PC-9 (cell line): ENCODE measurements at regions of chr20 and their contacts with region 1.

Region 1: DNA sequence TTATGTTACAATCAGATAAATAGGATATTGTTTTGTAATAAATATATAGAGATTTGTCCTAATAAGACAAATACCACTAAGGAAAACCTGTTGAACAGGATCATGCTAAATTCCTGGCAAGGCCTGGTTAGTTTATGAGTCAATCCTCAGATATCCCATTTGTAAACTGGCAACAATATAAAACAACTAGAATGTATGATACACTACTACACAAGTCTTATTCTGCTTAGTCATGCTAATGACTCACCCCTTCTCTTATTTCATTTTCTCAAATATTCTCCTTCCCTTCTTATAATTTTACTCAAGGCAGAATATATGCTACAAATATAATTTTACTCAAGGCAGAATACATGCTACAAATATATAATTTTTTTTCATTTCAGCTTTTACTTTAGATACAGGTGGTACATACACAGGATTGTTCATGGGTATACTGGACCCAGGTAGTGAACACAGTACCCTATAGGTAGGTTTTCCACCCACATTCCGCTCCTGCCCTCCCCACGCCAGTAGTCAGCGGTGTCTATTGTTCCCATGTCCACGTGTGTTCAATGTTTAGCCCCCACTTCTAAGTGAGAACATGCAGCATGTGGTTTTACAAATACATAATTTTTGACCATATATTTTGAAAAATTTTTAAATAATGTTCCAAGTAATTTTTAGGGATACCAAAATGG is 6.3 kb downstream of the OSER1 start:
- DNase-seq: peak; percentile 47 to 100
- H3K4me3 ChIP-seq: peak overlapping the region; percentile 49; the same call in 1 of the 2 replicates
- H3K27ac ChIP-seq: peak overlapping the region; percentile 96
- H3K4me1 ChIP-seq: peaks cover 84% of the 10 kb centered on the region
- H3K27me3 ChIP-seq: no peaks in the 10 kb centered on the region
- CTCF ChIP-seq: 0 out of 2 replicates have a peak, but pooled peaks have one; percentile 14

Region 2: DNA sequence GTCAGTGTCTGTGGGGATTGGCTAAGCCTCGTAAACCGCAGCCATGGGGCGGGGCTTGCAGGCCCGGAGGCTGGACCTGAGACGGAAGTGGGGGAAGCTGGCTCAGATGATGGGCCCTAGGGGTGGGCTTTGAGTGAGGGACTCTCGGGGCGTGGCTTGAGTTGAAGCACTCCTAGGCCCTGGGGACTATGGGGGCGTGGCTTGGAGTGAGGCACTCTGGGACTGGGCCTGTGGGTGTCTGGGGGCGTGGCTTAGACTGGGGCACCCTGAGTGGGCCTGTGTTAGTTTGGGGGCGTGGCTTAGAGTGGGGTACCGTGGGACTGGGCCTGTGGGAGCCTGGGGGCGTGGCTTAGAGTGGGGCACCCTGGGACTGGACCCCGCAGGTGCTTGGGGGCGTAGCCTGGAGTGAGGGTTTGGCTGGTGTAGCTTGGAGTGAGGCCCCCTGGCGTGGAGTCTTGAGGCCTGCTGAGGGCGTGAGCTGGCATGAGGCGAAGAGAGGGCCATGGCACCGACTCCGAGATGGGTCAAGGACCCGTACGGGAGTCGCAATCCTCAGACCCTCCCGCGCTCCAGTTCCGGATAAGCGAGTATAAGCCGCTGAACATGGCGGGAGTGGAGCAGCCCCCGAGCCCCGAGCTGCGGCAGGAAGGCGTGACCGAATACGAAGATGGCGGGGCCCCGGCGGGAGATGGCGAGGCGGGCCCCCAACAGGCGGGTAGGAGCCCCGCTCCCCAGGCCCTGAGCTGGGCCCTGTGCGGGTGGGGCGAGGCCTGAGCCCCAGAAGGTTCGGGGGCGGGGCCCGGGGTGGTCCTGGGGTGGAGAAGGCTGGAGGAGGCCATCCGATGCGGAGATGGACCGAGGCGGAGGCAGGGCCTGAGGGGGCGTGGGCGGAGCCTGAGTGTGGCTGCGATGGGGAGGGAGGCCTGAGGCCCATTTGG is 690.0 kb before region 1 on chr20:
- CTCF ChIA-PET with region 1: no interaction called
- POLR2A ChIA-PET with region 1: no interaction called
- intact Hi-C with region 1: loop called (anchors 1 kb)
- DNase-seq: peak; percentile 97 to 99
- H3K4me3 ChIP-seq: peak overlapping the region; percentile 60
- H3K27ac ChIP-seq: no peak overlapping the region
- H3K4me1 ChIP-seq: peaks cover 10% of the 10 kb centered on the region; the same call in 1 of the 2 replicates
- H3K27me3 ChIP-seq: no peaks in the 10 kb centered on the region
- CTCF ChIP-seq: peak; percentile 53

Region 3: DNA sequence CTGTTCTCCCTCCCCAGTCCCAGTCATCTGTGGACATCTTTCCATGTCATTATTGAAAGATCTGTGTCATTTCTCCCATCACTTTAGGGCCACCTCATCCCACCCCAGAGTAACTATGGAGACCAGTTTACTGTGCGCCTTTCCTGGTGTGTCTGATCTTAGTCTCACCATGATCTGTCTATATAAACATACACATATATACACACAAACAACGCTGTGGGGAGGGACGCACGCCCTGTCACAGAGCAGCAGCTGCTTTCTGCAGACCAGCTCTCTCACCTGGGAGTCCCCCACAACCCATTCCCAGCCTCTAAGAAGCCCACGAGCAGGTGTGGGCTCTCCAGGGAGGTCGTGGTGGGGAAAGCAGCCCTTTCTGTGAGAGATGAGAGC is 357.8 kb before region 1 on chr20:
- CTCF ChIA-PET with region 1: no interaction called
- POLR2A ChIA-PET with region 1: interaction called, 15 read pairs
- intact Hi-C with region 1: no loop called
- DNase-seq: no peak
- H3K4me3 ChIP-seq: no peak overlapping the region
- H3K27ac ChIP-seq: peak overlapping the region; percentile 88
- H3K4me1 ChIP-seq: peaks cover 85% of the 10 kb centered on the region
- H3K27me3 ChIP-seq: no peaks in the 10 kb centered on the region
- CTCF ChIP-seq: no peak